HepG2 (cell line): ENCODE measurements at regions of chr10 and their contacts with region 1.

Region 1: GRCh38 chr10:97138174-97138573 is 47.6 kb downstream of the SLIT1 start:
- DNase-seq: peak; percentile 50
- ATAC-seq: peak; percentile 55
- H3K4me3 ChIP-seq: no peak overlapping the region
- H3K27ac ChIP-seq: no peak overlapping the region
- H3K4me1 ChIP-seq: peaks cover 85% of the 10 kb centered on the region
- H3K27me3 ChIP-seq: peaks cover 0 to 14% of the 10 kb centered on the region in 2 experiments; a peak in 1 of 5 replicates
- CTCF ChIP-seq: peak; percentile 80
- EP300 ChIP-seq: no peak
- POLR2A ChIP-seq: no peak
- RAD21 ChIP-seq: peak; percentile 75; the same call in 1 of the 2 replicates

Region 2: DNA sequence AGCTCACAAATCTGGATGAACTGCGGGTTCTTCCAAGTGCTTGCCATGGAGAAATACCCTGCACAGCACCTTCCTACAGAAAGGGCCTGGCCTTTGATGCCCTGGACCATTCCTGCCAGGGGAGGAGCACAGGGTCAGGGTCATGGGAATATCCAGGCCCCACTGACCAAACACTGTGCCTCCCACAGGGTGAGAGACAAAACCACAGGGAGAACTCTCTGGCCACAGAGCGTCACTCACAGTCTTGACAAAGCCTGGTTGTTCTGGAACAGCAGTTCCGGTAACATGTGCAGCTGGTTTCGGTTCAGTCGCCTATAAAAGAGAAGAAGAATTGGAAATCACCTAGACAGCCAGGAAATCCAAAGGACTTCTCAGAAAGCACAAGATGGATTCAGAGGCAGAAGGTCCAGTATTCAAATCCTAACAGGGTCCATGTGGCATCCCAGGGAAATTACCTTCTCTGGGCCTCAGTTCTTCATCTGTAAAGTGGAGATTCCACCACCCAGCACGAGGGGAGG is 19.5 kb after region 1 on chr10:
- CTCF ChIA-PET with region 1: no interaction called
- POLR2A ChIA-PET with region 1: interaction called, 41 read pairs
- in situ Hi-C with region 1: no loop called
- intact Hi-C with region 1: loop called (anchors 1 kb)
- DNase-seq: peak; percentile 93
- ATAC-seq: peak; percentile 98
- H3K4me3 ChIP-seq: peak overlapping the region in 2 of 3 experiments; percentile 29 to 33; a peak in 2 of 6 replicates
- H3K27ac ChIP-seq: peak overlapping the region; percentile 66
- H3K4me1 ChIP-seq: peaks cover 54% of the 10 kb centered on the region
- H3K27me3 ChIP-seq: no peaks in the 10 kb centered on the region
- CTCF ChIP-seq: peak; percentile 60
- EP300 ChIP-seq: peak; percentile 54 to 92; a peak in 3 of 4 replicates
- POLR2A ChIP-seq: no peak
- RAD21 ChIP-seq: no peak

Region 3: GRCh38 chr10:97179731-97180362 is 41.7 kb after region 1 on chr10:
- CTCF ChIA-PET with region 1: interaction called, 3 read pairs
- POLR2A ChIA-PET with region 1: interaction called, 6 read pairs
- in situ Hi-C with region 1: no loop called
- intact Hi-C with region 1: loop called (anchors 10 kb)
- DNase-seq: peak; percentile 19
- ATAC-seq: peak; percentile 87
- H3K4me3 ChIP-seq: no peak overlapping the region
- H3K27ac ChIP-seq: no peak overlapping the region
- H3K4me1 ChIP-seq: peaks cover 8% of the 10 kb centered on the region
- H3K27me3 ChIP-seq: peaks cover 13 to 94% of the 10 kb centered on the region in 2 experiments
- CTCF ChIP-seq: peak; percentile 67
- EP300 ChIP-seq: no peak
- POLR2A ChIP-seq: no peak
- RAD21 ChIP-seq: peak; percentile 70

Region 4: DNA sequence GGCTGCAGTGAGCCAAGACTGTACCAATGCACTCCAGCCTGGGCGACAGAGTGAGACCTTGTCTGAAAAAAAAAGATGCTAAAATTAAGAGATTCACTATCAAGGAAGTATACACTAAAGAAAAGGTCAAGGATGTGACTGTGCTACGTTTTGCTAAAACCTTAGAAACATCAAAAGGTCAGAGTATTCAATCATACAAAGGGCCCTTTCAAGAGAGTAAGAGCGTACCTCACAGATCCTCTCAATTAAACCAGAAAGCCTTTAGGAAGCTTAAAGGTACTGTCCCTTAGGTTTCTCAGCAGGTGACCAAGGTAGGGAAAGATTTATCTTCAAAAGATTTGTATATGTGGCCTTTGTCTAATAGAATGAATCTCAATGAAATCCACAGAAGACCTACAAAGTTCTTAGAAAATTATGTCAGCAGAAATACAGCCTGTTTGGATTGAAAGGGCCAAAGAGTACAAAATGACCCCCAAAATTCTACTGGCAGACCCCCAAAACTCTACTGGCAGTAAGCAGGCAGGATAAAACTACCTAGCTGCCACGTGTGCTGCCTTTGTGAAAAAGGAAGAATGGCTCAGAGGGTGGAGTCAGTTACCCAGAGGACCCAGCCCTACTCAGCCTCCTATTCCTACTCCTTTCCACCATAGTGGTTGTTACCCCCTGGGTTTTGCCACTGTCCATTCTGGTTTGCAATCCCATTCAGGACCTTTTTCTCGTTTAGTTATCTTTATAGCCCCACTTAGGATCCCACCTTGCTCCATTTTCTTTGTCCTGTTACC is 117.5 kb after region 1 on chr10:
- CTCF ChIA-PET with region 1: no interaction called
- POLR2A ChIA-PET with region 1: no interaction called
- in situ Hi-C with region 1: no loop called
- intact Hi-C with region 1: no loop called
- DNase-seq: no peak
- ATAC-seq: no peak
- H3K4me3 ChIP-seq: no peak overlapping the region
- H3K27ac ChIP-seq: no peak overlapping the region
- H3K4me1 ChIP-seq: peaks cover 9% of the 10 kb centered on the region
- H3K27me3 ChIP-seq: no peaks in the 10 kb centered on the region
- CTCF ChIP-seq: no peak
- EP300 ChIP-seq: no peak
- POLR2A ChIP-seq: no peak
- RAD21 ChIP-seq: no peak